Spleen (tissue), 13 donors: ENCODE measurements at regions of chr9 and their contacts with region 1.

Region 1: GRCh38 chr9:136482793-136483588 is at the start of gene SEC16A:
- DNase-seq: peak; percentile 100
- H3K4me3 ChIP-seq: peak within 1 kb of the TSS; percentile 82 to 97 (median 86)
- H3K27ac ChIP-seq: peak within 1 kb of the TSS; percentile 96 to 100 (median 99)
- H3K4me1 ChIP-seq: peaks cover 34 to 88% (median 72%) of the 10 kb centered on the region in 6 donors
- H3K27me3 ChIP-seq: no peaks in the 10 kb centered on the region
- CTCF ChIP-seq: peak in 3 of 11 experiments; percentile 14 to 29 (median 16)
- POLR2A ChIP-seq: peak in 2 of 3 donors; percentile 38 to 44
- total RNA-seq, gene SEC16A: 74.6 to 92.1 (median 87.8) TPM

Region 2: DNA sequence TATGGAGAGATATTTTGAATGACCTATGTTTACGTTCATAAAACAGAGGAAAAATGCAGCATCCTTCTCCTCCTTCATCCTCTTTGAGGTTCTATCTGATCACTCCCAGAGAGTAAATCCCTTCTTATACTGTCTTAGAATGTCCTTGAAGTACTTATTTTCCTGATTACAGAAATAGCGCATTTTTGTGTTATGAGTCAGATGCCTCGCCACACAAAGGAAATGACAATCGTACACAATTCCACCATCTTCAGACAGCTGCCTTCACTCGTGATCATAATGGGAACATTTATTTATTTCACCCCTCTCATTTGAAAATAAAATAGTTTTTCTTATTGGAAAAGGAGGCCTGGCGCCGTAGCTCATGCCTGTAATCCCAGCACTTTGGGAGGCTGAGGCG is 841.2 kb before region 1 on chr9:
- intact Hi-C with region 1: no loop called
- DNase-seq: no peak
- H3K4me3 ChIP-seq: no peak overlapping the region
- H3K27ac ChIP-seq: no peak overlapping the region
- H3K4me1 ChIP-seq: no peaks in the 10 kb centered on the region
- H3K27me3 ChIP-seq: peaks cover 0 to 23% (median 0%) of the 10 kb centered on the region in 7 donors
- CTCF ChIP-seq: no peak
- POLR2A ChIP-seq: no peak

Region 3: DNA sequence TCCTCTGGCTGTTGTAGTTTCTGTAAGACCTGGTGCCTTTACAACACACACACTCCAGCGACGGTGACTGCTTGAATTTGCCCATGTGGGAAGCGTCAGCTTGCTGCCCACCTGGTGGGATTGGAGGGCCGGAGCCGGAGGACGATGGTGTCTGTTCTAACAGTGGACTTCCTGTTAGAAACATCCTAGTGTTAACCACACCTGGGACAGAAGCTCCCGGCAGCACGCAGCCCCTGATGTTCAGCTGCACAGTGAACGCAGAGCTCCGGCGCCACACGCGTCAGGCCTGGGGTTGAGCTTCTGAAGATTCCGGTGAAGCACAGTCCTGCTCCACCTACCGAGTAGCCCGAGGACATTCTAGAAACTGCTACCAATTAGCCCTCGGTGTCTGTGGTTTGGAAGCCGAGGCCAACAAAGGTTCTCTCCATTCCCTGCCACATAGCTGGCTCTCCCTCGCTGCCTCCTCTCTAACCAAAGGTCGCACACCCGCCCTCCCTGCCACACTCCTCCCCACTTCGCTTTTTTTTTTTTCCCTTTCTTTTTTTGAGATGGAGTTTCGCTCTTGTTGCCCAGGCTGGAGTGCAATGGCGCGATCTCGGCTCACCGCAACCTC is 58.1 kb before region 1 on chr9:
- intact Hi-C with region 1: no loop called
- DNase-seq: no peak
- H3K4me3 ChIP-seq: no peak overlapping the region
- H3K27ac ChIP-seq: no peak overlapping the region
- H3K4me1 ChIP-seq: peaks cover 0 to 6% (median 0%) of the 10 kb centered on the region in 6 donors
- H3K27me3 ChIP-seq: no peaks in the 10 kb centered on the region
- CTCF ChIP-seq: no peak
- POLR2A ChIP-seq: no peak

Region 4: GRCh38 chr9:136539427-136540421 is 56.7 kb after region 1 on chr9:
- intact Hi-C with region 1: loop called (anchors 10 kb)
- DNase-seq: peak; percentile 99
- H3K4me3 ChIP-seq: peak overlapping the region in 7 of 8 donors; percentile 14 to 60 (median 27)
- H3K27ac ChIP-seq: peak overlapping the region; percentile 85 to 100 (median 96)
- H3K4me1 ChIP-seq: peaks cover 71 to 99% (median 93%) of the 10 kb centered on the region in 6 donors
- H3K27me3 ChIP-seq: no peaks in the 10 kb centered on the region
- CTCF ChIP-seq: peak in 2 of 11 experiments; percentile 20 to 21
- POLR2A ChIP-seq: peak; percentile 19 to 39 (median 30)

Region 5: GRCh38 chr9:136551401-136552116 is 68.6 kb after region 1 on chr9:
- intact Hi-C with region 1: no loop called
- DNase-seq: no peak
- H3K4me3 ChIP-seq: peak overlapping the region in 1 of 8 donors; percentile 35
- H3K27ac ChIP-seq: peak overlapping the region; percentile 40 to 81 (median 69)
- H3K4me1 ChIP-seq: peaks cover 29 to 69% (median 45%) of the 10 kb centered on the region in 6 donors
- H3K27me3 ChIP-seq: no peaks in the 10 kb centered on the region
- CTCF ChIP-seq: no peak
- POLR2A ChIP-seq: no peak

Region 6: GRCh38 chr9:136671646-136672430 is 188.8 kb after region 1 on chr9:
- intact Hi-C with region 1: no loop called
- DNase-seq: no peak
- H3K4me3 ChIP-seq: peak overlapping the region in 2 of 8 donors; percentile 6 to 81
- H3K27ac ChIP-seq: peak overlapping the region in 5 of 8 donors; percentile 2 to 48 (median 38)
- H3K4me1 ChIP-seq: peaks cover 0 to 69% (median 27%) of the 10 kb centered on the region in 6 donors
- H3K27me3 ChIP-seq: peaks cover 0 to 37% (median 4%) of the 10 kb centered on the region in 7 donors
- CTCF ChIP-seq: peak; percentile 49 to 92 (median 82)
- POLR2A ChIP-seq: no peak